ENCODE measurements at regions of chr12 and their contacts with region 1.

Region 1: DNA sequence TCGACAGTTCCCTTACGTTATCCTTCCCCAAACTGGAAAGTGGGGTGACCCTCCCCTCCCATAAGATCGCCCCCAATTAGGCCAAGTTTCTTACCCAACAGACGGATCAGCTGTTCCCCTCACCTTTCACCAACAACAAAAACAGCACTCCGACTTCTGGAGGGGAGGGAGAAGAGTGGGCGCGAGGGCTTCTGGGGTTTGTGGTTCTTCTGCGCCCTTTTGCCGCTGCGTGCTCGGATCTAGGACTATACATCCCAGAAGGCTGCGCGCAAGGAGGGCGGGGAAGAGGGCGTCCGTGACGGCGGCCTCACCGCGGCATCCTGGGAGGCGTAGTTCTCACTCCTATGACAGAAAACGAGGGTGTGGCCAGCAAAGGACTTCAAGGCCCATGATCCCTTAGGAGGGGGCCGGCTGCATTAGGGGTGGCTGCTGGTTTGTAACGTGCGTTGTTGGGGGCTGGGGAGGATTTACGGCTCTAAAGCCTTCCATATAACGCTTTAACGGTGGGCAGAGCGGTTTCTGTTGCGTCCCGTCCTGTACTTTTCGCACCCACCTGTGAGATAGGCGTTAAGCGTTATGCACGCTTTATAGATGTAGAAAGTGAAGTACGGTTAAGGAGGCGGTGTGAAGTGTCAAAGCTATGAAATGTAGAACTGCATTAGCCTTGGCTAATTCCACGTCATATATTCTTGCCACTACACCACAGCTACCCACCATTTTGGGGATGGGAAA is at the start of gene CALCOCO1:
- DNase-seq: peak; percentile 95 to 99 (median 96)
- H3K4me3 ChIP-seq: peak within 1 kb of the TSS; percentile 72
- H3K4me3 Mint-ChIP-seq: peak within 1 kb of the TSS; percentile 91 to 100 (median 96)
- H3K27ac ChIP-seq: peak within 1 kb of the TSS; percentile 59
- H3K27ac Mint-ChIP-seq: peak within 1 kb of the TSS; percentile 79 to 98 (median 95)
- H3K4me1 ChIP-seq: peaks cover 23% of the 10 kb centered on the region
- H3K4me1 Mint-ChIP-seq: peaks cover 21 to 33% (median 27%) of the 10 kb centered on the region in 4 donors
- H3K27me3 ChIP-seq: no peaks in the 10 kb centered on the region
- H3K27me3 Mint-ChIP-seq: no peaks in the 10 kb centered on the region
- total RNA-seq, gene CALCOCO1: 177 to 178 TPM

Region 2: DNA sequence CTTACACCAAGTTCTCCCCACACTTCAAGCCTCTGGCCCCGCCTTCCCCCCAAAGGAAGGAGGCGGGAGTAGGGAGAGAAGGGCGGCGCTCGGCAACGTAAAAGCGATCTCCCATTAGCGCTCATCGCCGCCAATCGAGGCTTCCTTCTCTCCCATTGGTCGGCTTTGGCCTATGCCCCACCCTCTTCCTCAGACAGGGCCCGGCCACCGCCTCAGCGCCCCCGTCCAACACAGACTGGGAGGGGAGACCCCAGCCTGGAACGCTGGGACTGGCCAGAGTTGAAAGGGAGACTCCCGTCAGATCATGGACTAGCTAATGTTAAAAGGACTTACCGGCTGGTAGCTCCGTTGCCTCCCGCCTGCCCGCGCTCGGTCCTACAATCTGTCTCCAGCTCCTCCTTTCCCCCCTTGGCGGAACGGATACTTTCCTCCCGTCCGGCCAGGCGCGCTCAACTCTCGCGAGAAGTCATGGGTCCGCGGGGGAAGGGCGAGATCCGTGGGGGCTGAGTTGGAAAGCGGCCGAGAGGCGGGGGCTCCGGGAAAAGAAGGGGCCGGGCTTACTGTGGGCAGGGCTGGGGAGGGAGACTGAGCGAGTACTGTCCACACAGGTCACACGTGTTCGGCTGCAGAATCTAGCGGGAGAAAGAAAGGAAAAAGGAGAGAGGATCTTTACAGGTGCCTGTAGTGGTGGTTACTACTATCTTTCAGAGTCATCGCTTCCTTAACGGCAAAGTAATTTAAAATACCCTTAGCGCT is 101.4 kb before region 1 on chr12 and contains the start of gene ATF7:
- CTCF ChIA-PET with region 1: no interaction called
- POLR2A ChIA-PET with region 1: no interaction called
- intact Hi-C with region 1: loop called (anchors 1 kb)
- DNase-seq: peak; percentile 97 to 100 (median 98)
- H3K4me3 ChIP-seq: peak within 1 kb of the TSS; percentile 84 to 96
- H3K4me3 Mint-ChIP-seq: peak within 1 kb of the TSS; percentile 98 to 99 (median 98)
- H3K27ac ChIP-seq: peak within 1 kb of the TSS; percentile 83
- H3K27ac Mint-ChIP-seq: peak within 1 kb of the TSS; percentile 89 to 99 (median 98)
- H3K4me1 ChIP-seq: peaks cover 37% of the 10 kb centered on the region
- H3K4me1 Mint-ChIP-seq: peaks cover 35 to 57% (median 46%) of the 10 kb centered on the region in 4 donors
- H3K27me3 ChIP-seq: no peaks in the 10 kb centered on the region
- H3K27me3 Mint-ChIP-seq: no peaks in the 10 kb centered on the region
- total RNA-seq, gene ATF7: 26.8 to 35.8 TPM

Region 3: GRCh38 chr12:53701518-53702260 is 25.8 kb before region 1 on chr12:
- CTCF ChIA-PET with region 1: interaction called, 25 read pairs
- POLR2A ChIA-PET with region 1: no interaction called
- intact Hi-C with region 1: loop called (anchors 2 kb)
- DNase-seq: peak; percentile 65 to 72 (median 69)
- H3K4me3 ChIP-seq: no peak overlapping the region
- H3K4me3 Mint-ChIP-seq: no peak overlapping the region
- H3K27ac ChIP-seq: no peak overlapping the region
- H3K27ac Mint-ChIP-seq: peak overlapping the region in 1 of 7 donors; percentile 10
- H3K4me1 ChIP-seq: peaks cover 4% of the 10 kb centered on the region
- H3K4me1 Mint-ChIP-seq: peaks cover 4 to 12% (median 9%) of the 10 kb centered on the region in 4 donors
- H3K27me3 ChIP-seq: peaks cover 30% of the 10 kb centered on the region
- H3K27me3 Mint-ChIP-seq: peaks cover 54 to 75% of the 10 kb centered on the region in 2 donors

Region 4: DNA sequence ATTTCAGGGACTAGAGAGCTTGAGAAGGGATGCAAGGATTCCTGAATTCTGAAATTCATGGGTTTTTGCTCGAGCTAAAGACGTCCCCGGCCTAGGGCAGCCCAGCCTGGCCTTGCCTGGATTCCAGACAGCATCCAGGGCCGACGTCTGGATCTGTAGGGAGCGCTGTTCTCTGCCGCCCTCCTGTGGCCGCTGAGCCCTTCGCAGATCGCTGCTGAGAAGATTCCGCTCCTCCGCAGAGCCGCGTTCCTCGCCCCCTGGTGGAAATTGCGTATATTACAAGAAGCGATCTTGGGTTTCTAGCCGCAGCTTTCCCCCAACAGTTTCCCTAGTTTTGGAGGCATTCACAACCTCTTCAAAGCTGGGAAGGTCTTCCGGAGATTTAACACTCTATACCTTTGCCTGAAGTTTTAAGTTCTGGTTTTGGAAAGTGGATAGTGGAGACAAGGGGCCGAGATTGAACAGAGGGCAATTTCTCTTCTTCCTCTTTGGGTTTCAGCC is 19.2 kb after region 1 on chr12:
- CTCF ChIA-PET with region 1: interaction called, 290 read pairs
- POLR2A ChIA-PET with region 1: interaction called, 21 read pairs
- intact Hi-C with region 1: loop called (anchors 1 kb)
- DNase-seq: peak; percentile 82 to 86 (median 84)
- H3K4me3 ChIP-seq: no peak overlapping the region
- H3K4me3 Mint-ChIP-seq: peak overlapping the region in 6 of 8 donors; percentile 48 to 84 (median 70)
- H3K27ac ChIP-seq: no peak overlapping the region
- H3K27ac Mint-ChIP-seq: peak overlapping the region in 1 of 7 donors; percentile 87
- H3K4me1 ChIP-seq: peaks cover 37% of the 10 kb centered on the region
- H3K4me1 Mint-ChIP-seq: peaks cover 8 to 21% (median 18%) of the 10 kb centered on the region in 4 donors
- H3K27me3 ChIP-seq: peaks cover 40% of the 10 kb centered on the region
- H3K27me3 Mint-ChIP-seq: peaks cover 22 to 39% of the 10 kb centered on the region in 2 donors

Region 5: GRCh38 chr12:54134850-54135249 is 407.4 kb after region 1 on chr12:
- CTCF ChIA-PET with region 1: no interaction called
- POLR2A ChIA-PET with region 1: no interaction called
- intact Hi-C with region 1: no loop called
- DNase-seq: no peak
- H3K4me3 ChIP-seq: no peak overlapping the region
- H3K4me3 Mint-ChIP-seq: no peak overlapping the region
- H3K27ac ChIP-seq: no peak overlapping the region
- H3K27ac Mint-ChIP-seq: no peak overlapping the region
- H3K4me1 ChIP-seq: no peaks in the 10 kb centered on the region
- H3K4me1 Mint-ChIP-seq: no peaks in the 10 kb centered on the region
- H3K27me3 ChIP-seq: no peaks in the 10 kb centered on the region
- H3K27me3 Mint-ChIP-seq: peaks cover 29 to 47% of the 10 kb centered on the region in 2 donors

Region 6: DNA sequence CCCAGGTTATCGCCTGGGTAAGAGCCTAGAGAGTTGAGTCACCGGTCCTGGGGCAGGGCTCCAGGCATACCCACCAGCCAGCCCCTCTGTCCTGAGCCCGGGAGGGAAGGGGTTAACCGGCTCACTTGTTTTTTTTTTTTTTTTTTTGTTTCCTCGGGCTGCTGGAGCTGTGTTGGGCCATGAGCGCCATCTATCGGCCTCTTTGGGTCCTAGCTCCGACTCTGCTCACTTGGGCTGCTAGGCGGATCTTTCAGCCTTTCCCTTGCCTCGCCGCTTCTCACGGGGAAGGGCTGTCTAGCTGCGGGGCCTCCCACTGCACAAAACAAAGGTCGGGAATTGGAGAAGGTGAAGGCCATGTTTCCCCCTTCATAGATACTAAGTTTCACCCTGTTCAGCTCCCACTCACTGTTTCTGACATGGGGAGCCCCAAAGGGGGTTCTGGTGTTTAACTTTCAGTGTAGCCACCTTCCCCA is 464.1 kb after region 1 on chr12:
- CTCF ChIA-PET with region 1: no interaction called
- POLR2A ChIA-PET with region 1: no interaction called
- intact Hi-C with region 1: loop called (anchors 1 kb)
- DNase-seq: peak; percentile 79 to 81 (median 79)
- H3K4me3 ChIP-seq: no peak overlapping the region
- H3K4me3 Mint-ChIP-seq: peak overlapping the region in 4 of 8 donors; percentile 11 to 66 (median 32)
- H3K27ac ChIP-seq: no peak overlapping the region
- H3K27ac Mint-ChIP-seq: peak overlapping the region in 2 of 7 donors; percentile 67 to 68
- H3K4me1 ChIP-seq: peaks cover 22% of the 10 kb centered on the region
- H3K4me1 Mint-ChIP-seq: peaks cover 17 to 60% (median 25%) of the 10 kb centered on the region in 4 donors
- H3K27me3 ChIP-seq: peaks cover 23% of the 10 kb centered on the region
- H3K27me3 Mint-ChIP-seq: peaks cover 20 to 32% of the 10 kb centered on the region in 2 donors

Region 7: DNA sequence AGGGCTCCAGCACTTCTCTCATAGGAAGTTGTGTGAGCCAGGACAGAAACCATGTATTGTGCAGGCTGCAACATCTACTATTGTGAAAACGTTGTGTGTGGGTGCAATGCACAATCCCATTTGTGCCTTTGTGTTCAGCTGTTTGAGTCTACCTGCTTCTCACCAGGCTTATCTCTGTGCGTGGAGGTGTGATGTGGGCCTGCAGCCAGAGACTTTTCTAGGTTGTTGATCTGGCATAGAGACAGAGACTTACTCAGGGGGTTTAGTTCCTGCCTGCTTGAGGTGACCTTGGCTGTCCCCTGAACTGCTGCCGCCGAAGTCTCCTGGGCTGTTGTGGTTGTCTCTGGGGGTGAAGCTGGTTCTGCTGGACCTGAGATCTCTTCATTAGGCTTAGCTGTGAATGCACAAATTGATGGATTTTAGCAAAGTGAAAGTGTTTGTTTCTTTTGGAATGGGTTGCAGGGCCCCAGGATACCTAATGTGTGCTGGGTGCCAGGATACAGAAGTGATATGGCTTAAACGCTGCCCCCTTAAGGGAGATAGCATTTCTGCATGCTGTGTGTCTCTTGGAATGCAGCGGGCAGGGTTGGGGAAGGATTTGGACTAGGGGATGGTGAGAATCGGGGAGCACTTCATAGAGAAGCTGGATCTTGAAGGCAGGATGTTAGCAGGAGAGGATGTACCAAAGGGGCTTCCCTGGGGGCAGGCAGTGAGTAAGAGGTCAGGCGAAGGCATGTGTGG is 904.7 kb after region 1 on chr12:
- CTCF ChIA-PET with region 1: no interaction called
- POLR2A ChIA-PET with region 1: no interaction called
- intact Hi-C with region 1: no loop called
- DNase-seq: no peak
- H3K4me3 ChIP-seq: no peak overlapping the region
- H3K4me3 Mint-ChIP-seq: peak overlapping the region in 1 of 8 donors; percentile 20
- H3K27ac ChIP-seq: no peak overlapping the region
- H3K27ac Mint-ChIP-seq: no peak overlapping the region
- H3K4me1 ChIP-seq: no peaks in the 10 kb centered on the region
- H3K4me1 Mint-ChIP-seq: peaks cover 0 to 2% (median 0%) of the 10 kb centered on the region in 4 donors
- H3K27me3 ChIP-seq: peaks cover 4% of the 10 kb centered on the region
- H3K27me3 Mint-ChIP-seq: peaks cover 35 to 48% of the 10 kb centered on the region in 2 donors

Region 8: GRCh38 chr12:54661048-54661447 is 933.6 kb after region 1 on chr12:
- CTCF ChIA-PET with region 1: no interaction called
- POLR2A ChIA-PET with region 1: no interaction called
- intact Hi-C with region 1: no loop called
- DNase-seq: no peak
- H3K4me3 ChIP-seq: no peak overlapping the region
- H3K4me3 Mint-ChIP-seq: no peak overlapping the region
- H3K27ac ChIP-seq: no peak overlapping the region
- H3K27ac Mint-ChIP-seq: no peak overlapping the region
- H3K4me1 ChIP-seq: no peaks in the 10 kb centered on the region
- H3K4me1 Mint-ChIP-seq: no peaks in the 10 kb centered on the region
- H3K27me3 ChIP-seq: peaks cover 4% of the 10 kb centered on the region
- H3K27me3 Mint-ChIP-seq: peaks cover 9 to 15% of the 10 kb centered on the region in 2 donors